HCT116 (cell line): ENCODE measurements at regions of chr16 and their contacts with region 1.

Region 1: DNA sequence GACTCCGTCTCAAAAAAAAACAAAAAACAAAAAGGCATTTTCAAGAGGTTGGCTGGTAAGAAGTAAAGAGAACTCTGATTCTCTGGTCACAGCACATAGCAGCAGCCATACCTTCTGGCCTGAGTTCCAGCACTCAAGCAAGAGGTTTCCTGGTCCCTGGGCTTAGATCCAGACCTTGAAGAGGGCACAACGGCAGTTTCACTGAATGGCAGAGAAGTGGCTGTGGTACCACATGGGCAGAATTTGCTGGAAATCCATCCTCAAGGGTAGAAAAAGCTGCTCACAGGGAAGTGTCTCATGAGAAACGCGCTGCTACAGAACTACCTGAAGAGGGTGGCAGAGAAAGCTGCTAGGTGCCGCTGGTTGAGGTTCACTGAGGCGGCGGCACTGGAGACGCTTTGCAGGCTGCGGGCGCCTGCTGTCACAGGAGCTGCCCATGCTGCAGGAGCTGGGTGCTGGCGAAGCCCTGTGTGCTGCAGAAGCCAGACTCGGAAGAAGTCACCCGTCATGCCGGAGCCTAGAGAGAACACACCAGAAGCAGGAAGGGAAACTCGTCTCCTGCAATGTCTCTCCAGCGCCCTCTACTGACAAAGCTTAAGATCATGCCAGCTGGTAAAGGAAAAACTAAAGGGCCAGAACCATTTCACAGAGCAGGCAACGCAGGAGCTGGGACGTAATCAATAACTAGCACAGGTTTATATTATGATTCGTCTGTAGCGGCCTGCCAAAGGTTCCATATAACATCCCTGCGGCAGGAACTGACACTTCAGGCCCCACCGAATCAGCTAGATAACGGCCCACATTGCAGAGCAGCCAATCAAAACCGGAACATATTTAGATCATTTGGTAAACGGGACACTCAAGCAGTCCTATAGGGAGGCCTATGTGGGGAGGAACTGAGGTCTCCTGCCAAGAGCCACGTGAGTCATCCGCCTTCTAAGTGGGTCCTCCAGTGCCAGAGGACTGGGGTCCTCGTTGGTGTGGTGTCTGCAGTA is 5.4 kb upstream of the ZNF213 start:
- DNase-seq: no peak
- ATAC-seq: peak; percentile 70
- H3K4me3 ChIP-seq: peak overlapping the region; percentile 39 to 46
- H3K27ac ChIP-seq: peak overlapping the region; percentile 82
- H3K4me1 ChIP-seq: peaks cover 19 to 34% of the 10 kb centered on the region in 2 experiments
- H3K27me3 ChIP-seq: no peaks in the 10 kb centered on the region
- CTCF ChIP-seq: peak; percentile 89 to 97 (median 91)
- POLR2A ChIP-seq: no peak
- RAD21 ChIP-seq: peak; percentile 72

Region 2: DNA sequence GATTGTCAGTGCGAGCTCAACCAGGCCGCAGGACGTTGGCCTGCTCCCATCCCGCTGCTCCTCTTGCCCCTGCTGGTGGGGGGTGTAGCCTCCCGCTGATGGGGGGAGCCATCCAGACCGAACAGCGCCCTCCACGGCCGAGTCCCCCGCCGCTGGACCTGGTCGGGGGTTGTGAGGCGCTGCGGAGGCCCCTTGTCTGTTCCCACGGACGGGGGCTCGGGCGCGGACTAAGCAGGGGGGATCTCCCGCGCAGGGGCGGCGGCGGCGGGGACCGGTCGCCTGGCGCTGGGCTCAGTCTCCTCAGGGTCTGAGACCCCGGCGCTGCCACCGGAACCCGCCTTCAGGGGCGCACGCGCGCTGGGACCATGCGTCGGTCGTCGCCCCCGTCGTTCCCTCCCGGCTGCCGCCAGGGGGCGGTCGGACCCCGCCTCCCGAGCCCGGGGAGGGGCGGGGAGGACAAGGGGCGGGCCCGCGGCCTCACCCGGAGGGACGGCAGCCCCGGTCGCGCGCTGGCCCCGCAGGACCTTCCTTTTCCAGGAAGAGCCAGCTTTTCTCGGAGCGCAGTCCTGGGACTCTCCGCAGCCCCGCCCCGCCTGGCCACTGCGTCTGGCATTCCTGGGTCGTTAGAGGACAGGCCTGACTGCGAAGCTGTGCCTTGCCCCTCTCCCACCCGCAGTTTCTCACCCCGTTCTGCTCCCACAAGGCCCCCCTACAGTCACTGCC is 70.3 kb before region 1 on chr16:
- CTCF ChIA-PET with region 1: interaction called, 16 read pairs
- POLR2A ChIA-PET with region 1: interaction called, 6 read pairs
- RAD21 ChIA-PET with region 1: no interaction called
- intact Hi-C with region 1: loop called (anchors 2 kb)
- DNase-seq: peak; percentile 60
- ATAC-seq: peak; percentile 86
- H3K4me3 ChIP-seq: peak overlapping the region; percentile 81 to 87
- H3K27ac ChIP-seq: peak overlapping the region; percentile 84
- H3K4me1 ChIP-seq: peaks cover 0 to 22% of the 10 kb centered on the region in 2 experiments; a peak in 3 of 4 replicates
- H3K27me3 ChIP-seq: no peaks in the 10 kb centered on the region
- CTCF ChIP-seq: peak; percentile 58 to 94 (median 66)
- POLR2A ChIP-seq: no peak
- RAD21 ChIP-seq: peak; percentile 89

Region 3: GRCh38 chr16:3112058-3112880 is 17.2 kb before region 1 on chr16 and contains the start of gene ZNF205:
- CTCF ChIA-PET with region 1: interaction called, 10 read pairs
- POLR2A ChIA-PET with region 1: interaction called, 3 read pairs
- RAD21 ChIA-PET with region 1: no interaction called
- intact Hi-C with region 1: no loop called
- DNase-seq: no peak
- ATAC-seq: peak; percentile 99
- H3K4me3 ChIP-seq: peak within 1 kb of the TSS; percentile 96 to 99
- H3K27ac ChIP-seq: peak within 1 kb of the TSS; percentile 67
- H3K4me1 ChIP-seq: peaks cover 10 to 29% of the 10 kb centered on the region in 2 experiments
- H3K27me3 ChIP-seq: no peaks in the 10 kb centered on the region
- CTCF ChIP-seq: no peak
- POLR2A ChIP-seq: peak; percentile 25
- RAD21 ChIP-seq: no peak
- total RNA-seq, gene ZNF205: 17.0 TPM

Region 4: DNA sequence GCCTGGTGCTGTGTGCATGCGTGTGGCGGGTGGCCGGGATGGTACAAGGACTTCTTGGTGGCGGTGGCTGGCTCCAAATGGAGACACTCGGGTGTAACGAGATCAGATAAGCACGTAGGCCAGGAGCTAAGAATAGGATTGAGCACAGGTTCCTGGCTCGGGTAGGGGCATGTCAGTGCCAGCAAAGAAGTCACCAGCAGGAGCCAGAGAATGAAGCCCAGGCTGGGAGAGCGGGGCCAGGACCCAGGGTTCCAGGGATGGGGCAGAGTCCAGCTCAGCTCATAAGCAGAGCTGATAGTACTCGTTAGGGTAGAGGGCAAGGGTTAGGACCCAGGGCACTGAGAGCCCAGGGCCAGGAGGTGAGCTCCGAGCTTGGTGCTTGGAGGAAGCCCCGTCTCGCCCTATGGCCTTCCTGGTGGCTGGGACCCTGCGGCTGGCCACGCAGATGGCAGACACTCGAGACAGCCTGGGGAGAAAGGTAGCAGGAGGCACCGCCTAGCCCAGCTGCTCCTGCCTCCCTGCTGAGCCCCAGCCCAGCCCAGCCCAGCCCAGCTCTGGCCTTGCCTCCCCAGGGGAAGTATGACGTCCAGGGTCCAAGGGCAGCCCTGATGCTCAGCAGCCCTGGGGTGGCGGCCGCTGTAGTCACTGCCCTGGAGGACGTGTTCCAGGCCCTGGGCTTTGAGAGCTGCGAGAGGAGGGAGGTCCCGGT is 14.3 kb after region 1 on chr16:
- CTCF ChIA-PET with region 1: interaction called, 12 read pairs
- POLR2A ChIA-PET with region 1: interaction called, 34 read pairs
- RAD21 ChIA-PET with region 1: no interaction called
- intact Hi-C with region 1: no loop called
- DNase-seq: no peak
- ATAC-seq: no peak
- H3K4me3 ChIP-seq: no peak overlapping the region
- H3K27ac ChIP-seq: no peak overlapping the region; the same call in 1 of the 2 replicates
- H3K4me1 ChIP-seq: peaks cover 2 to 6% of the 10 kb centered on the region in 2 experiments
- H3K27me3 ChIP-seq: no peaks in the 10 kb centered on the region
- CTCF ChIP-seq: no peak
- POLR2A ChIP-seq: no peak
- RAD21 ChIP-seq: no peak

Region 5: GRCh38 chr16:3150346-3151218 is 21.1 kb after region 1 on chr16:
- CTCF ChIA-PET with region 1: interaction called, 15 read pairs
- POLR2A ChIA-PET with region 1: interaction called, 34 read pairs
- RAD21 ChIA-PET with region 1: interaction called, 4 to 7 read pairs
- intact Hi-C with region 1: loop called (anchors 2 kb)
- DNase-seq: peak; percentile 92
- ATAC-seq: peak; percentile 77
- H3K4me3 ChIP-seq: peak overlapping the region; percentile 54 to 65
- H3K27ac ChIP-seq: peak overlapping the region; percentile 95
- H3K4me1 ChIP-seq: peaks cover 8 to 38% of the 10 kb centered on the region in 2 experiments
- H3K27me3 ChIP-seq: no peaks in the 10 kb centered on the region
- CTCF ChIP-seq: no peak
- POLR2A ChIP-seq: no peak
- RAD21 ChIP-seq: no peak

Region 6: GRCh38 chr16:3165111-3165822 is 35.8 kb after region 1 on chr16:
- CTCF ChIA-PET with region 1: interaction called, 14 read pairs
- POLR2A ChIA-PET with region 1: interaction called, 6 read pairs
- RAD21 ChIA-PET with region 1: no interaction called
- intact Hi-C with region 1: loop called (anchors 5 kb)
- DNase-seq: no peak
- ATAC-seq: peak; percentile 5
- H3K4me3 ChIP-seq: no peak overlapping the region
- H3K27ac ChIP-seq: peak overlapping the region; percentile 30; the same call in 1 of the 2 replicates
- H3K4me1 ChIP-seq: peaks cover 11 to 39% of the 10 kb centered on the region in 2 experiments; a peak in 3 of 4 replicates
- H3K27me3 ChIP-seq: no peaks in the 10 kb centered on the region
- CTCF ChIP-seq: no peak
- POLR2A ChIP-seq: no peak
- RAD21 ChIP-seq: no peak

Region 7: GRCh38 chr16:3173892-3174617 is 44.6 kb after region 1 on chr16:
- CTCF ChIA-PET with region 1: interaction called, 22 read pairs
- POLR2A ChIA-PET with region 1: interaction called, 11 read pairs
- RAD21 ChIA-PET with region 1: no interaction called
- intact Hi-C with region 1: loop called (anchors 5 kb)
- DNase-seq: no peak
- ATAC-seq: peak; percentile 30
- H3K4me3 ChIP-seq: peak overlapping the region; percentile 23 to 24
- H3K27ac ChIP-seq: peak overlapping the region; percentile 26
- H3K4me1 ChIP-seq: peaks cover 35 to 54% of the 10 kb centered on the region in 2 experiments
- H3K27me3 ChIP-seq: no peaks in the 10 kb centered on the region
- CTCF ChIP-seq: peak in 2 of 3 experiments; percentile 89 to 94; a peak in 4 of 6 replicates
- POLR2A ChIP-seq: peak; percentile 44
- RAD21 ChIP-seq: no peak

Region 8: GRCh38 chr16:3443108-3444031 is 313.9 kb after region 1 on chr16 and contains the starts of genes NAA60 and ZNF597:
- CTCF ChIA-PET with region 1: no interaction called
- POLR2A ChIA-PET with region 1: no interaction called
- RAD21 ChIA-PET with region 1: no interaction called
- intact Hi-C with region 1: no loop called
- DNase-seq: peak; percentile 83
- ATAC-seq: peak; percentile 93
- H3K4me3 ChIP-seq: peak within 1 kb of the TSS; percentile 62 to 82
- H3K27ac ChIP-seq: peak within 1 kb of the TSS; percentile 67
- H3K4me1 ChIP-seq: peaks cover 0 to 9% of the 10 kb centered on the region in 2 experiments; a peak in 1 of 4 replicates
- H3K27me3 ChIP-seq: no peaks in the 10 kb centered on the region
- CTCF ChIP-seq: no peak
- POLR2A ChIP-seq: peak; percentile 5
- RAD21 ChIP-seq: no peak
- total RNA-seq, gene NAA60: 32.2 TPM
- total RNA-seq, gene ZNF597: 3.2 TPM